Caco-2 (cell line): ENCODE measurements at regions of chr12 and their contacts with region 1.

Region 1: GRCh38 chr12:45914090-45914489 is 76.3 kb downstream of the SCAF11 start:
- DNase-seq: no peak
- H3K4me3 ChIP-seq: no peak overlapping the region
- H3K4me3 Mint-ChIP-seq: no peak overlapping the region
- H3K27ac Mint-ChIP-seq: no peak overlapping the region
- H3K4me1 ChIP-seq: no peaks in the 10 kb centered on the region
- H3K4me1 Mint-ChIP-seq: peaks cover 15% of the 10 kb centered on the region
- H3K27me3 ChIP-seq: no peaks in the 10 kb centered on the region
- H3K27me3 Mint-ChIP-seq: no peaks in the 10 kb centered on the region
- CTCF ChIP-seq: no peak

Region 2: DNA sequence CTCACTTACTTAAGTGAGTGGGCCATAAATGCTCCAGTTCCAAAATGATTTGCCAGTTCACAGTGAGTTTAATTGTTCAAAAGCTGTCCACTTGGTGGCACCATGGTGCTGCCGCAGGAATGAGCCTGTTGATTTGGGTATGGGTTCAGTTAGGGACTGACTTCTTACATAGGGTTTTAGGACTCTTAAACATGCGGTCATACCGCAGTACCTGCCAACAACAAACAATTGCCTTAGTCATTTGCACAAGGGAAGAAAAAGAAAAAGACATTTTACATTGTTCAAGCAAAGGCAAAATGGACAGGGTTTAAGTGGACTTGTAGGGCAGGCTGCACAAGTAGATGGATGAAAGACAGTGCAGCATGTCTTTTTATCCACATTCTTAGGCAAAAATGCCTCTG is 783.2 kb before region 1 on chr12:
- CTCF ChIA-PET with region 1: no interaction called
- POLR2A ChIA-PET with region 1: no interaction called
- intact Hi-C with region 1: loop called (anchors 5 kb)
- DNase-seq: peak; percentile 65 to 74
- H3K4me3 ChIP-seq: no peak overlapping the region
- H3K4me3 Mint-ChIP-seq: no peak overlapping the region
- H3K27ac Mint-ChIP-seq: no peak overlapping the region
- H3K4me1 ChIP-seq: no peaks in the 10 kb centered on the region
- H3K4me1 Mint-ChIP-seq: no peaks in the 10 kb centered on the region
- H3K27me3 ChIP-seq: no peaks in the 10 kb centered on the region
- H3K27me3 Mint-ChIP-seq: no peaks in the 10 kb centered on the region
- CTCF ChIP-seq: peak; percentile 77 to 85

Region 3: DNA sequence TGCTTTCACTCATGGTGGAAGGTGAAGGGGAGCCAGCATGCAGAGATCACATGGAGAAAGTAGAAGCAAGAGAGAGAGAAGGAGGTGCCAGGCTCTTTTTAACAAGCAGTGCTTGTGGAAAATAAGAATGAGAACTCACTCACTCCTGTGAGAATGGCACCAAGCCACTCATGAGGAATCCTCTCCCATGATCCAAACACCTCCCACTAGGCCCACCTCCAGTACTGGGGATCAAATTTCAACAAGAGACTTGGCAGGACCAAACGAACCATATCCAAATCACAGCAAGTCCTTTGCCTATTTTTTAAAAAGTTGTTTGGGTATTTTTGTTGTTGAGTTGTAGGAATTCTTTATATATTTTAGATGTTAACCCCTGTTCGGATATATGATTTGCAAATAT is 430.5 kb before region 1 on chr12:
- CTCF ChIA-PET with region 1: no interaction called
- POLR2A ChIA-PET with region 1: no interaction called
- intact Hi-C with region 1: no loop called
- DNase-seq: no peak
- H3K4me3 ChIP-seq: no peak overlapping the region
- H3K4me3 Mint-ChIP-seq: no peak overlapping the region
- H3K27ac Mint-ChIP-seq: no peak overlapping the region
- H3K4me1 ChIP-seq: no peaks in the 10 kb centered on the region
- H3K4me1 Mint-ChIP-seq: no peaks in the 10 kb centered on the region
- H3K27me3 ChIP-seq: no peaks in the 10 kb centered on the region
- H3K27me3 Mint-ChIP-seq: peaks cover 2% of the 10 kb centered on the region
- CTCF ChIP-seq: no peak

Region 4: GRCh38 chr12:47736877-47737676 is 1823.0 kb after region 1 on chr12:
- CTCF ChIA-PET with region 1: no interaction called
- POLR2A ChIA-PET with region 1: no interaction called
- intact Hi-C with region 1: no loop called
- DNase-seq: no peak
- H3K4me3 ChIP-seq: no peak overlapping the region
- H3K4me3 Mint-ChIP-seq: no peak overlapping the region
- H3K27ac Mint-ChIP-seq: no peak overlapping the region
- H3K4me1 ChIP-seq: no peaks in the 10 kb centered on the region
- H3K4me1 Mint-ChIP-seq: no peaks in the 10 kb centered on the region
- H3K27me3 ChIP-seq: no peaks in the 10 kb centered on the region
- H3K27me3 Mint-ChIP-seq: no peaks in the 10 kb centered on the region
- CTCF ChIP-seq: no peak